ENCODE measurements at regions of chr22 and their contacts with region 1.

Region 1: GRCh38 chr22:19717691-19718455 is 3.6 kb downstream of the SEPTIN5 start:
- DNase-seq: peak; percentile 80 to 94 (median 93)
- ATAC-seq: peak; percentile 67 to 73
- H3K4me3 ChIP-seq: peak overlapping the region; percentile 50
- H3K27ac ChIP-seq: peak overlapping the region; percentile 85
- H3K4me1 ChIP-seq: no peaks in the 10 kb centered on the region
- H3K27me3 ChIP-seq: no peaks in the 10 kb centered on the region

Region 2: GRCh38 chr22:19679522-19680101 is 38.3 kb before region 1 on chr22:
- intact Hi-C with region 1: loop called in 3 of 4 experiments (anchors 5 kb)
- DNase-seq: peak; percentile 56 to 89 (median 89)
- ATAC-seq: peak; percentile 89
- H3K4me3 ChIP-seq: no peak overlapping the region
- H3K27ac ChIP-seq: no peak overlapping the region
- H3K4me1 ChIP-seq: no peaks in the 10 kb centered on the region
- H3K27me3 ChIP-seq: no peaks in the 10 kb centered on the region

Measured in right cardiac atrium (tissue), 5 donors.